H1 (cell line): ENCODE measurements at regions of chr5 and their contacts with region 1.

Region 1: DNA sequence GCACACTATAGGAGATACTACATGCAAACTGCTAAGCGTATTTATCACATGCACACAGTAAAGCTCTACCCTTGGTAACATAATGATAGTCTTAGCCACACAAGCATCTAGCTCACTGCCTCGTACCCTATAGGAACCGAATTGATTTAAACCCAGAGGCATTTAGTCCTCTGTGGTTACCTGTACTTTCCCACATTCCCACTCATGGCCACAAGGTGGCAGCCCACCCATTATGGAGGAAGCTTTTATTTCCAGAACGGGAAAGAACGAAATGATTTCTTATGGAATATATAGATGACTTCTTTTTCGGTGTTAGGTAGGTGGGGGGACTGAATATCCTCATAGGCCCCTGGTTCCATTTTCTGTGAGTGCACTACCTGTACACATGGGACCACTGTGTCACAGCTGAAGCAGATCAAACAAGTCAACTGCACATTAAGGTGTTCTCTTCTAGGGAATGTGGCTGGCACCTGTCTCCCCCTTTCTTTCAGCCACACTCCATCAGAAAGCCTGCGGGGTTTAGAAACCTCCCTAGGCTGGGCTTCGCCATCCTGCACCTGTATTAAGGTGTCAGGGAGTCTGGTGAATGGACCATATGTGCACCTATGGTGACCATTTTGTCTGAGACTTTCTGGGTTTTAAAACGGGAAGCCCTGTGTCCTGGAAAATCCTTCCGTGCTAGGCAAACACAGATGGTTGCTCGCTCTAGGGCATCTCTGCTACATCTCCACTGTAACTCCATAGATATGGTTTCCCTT is 313.2 kb downstream of the SLIT3 start:
- DNase-seq: peak; percentile 25 to 91
- H3K4me3 ChIP-seq: no peak overlapping the region
- H3K27ac ChIP-seq: no peak overlapping the region
- H3K4me1 ChIP-seq: peaks cover 3 to 22% (median 13%) of the 10 kb centered on the region in 4 experiments; a peak in 6 of 7 replicates
- H3K27me3 ChIP-seq: no peaks in the 10 kb centered on the region
- CTCF ChIP-seq: peak; percentile 46 to 85 (median 78)
- EP300 ChIP-seq: no peak
- POLR2A ChIP-seq: no peak
- RAD21 ChIP-seq: peak; percentile 92 to 94

Region 2: DNA sequence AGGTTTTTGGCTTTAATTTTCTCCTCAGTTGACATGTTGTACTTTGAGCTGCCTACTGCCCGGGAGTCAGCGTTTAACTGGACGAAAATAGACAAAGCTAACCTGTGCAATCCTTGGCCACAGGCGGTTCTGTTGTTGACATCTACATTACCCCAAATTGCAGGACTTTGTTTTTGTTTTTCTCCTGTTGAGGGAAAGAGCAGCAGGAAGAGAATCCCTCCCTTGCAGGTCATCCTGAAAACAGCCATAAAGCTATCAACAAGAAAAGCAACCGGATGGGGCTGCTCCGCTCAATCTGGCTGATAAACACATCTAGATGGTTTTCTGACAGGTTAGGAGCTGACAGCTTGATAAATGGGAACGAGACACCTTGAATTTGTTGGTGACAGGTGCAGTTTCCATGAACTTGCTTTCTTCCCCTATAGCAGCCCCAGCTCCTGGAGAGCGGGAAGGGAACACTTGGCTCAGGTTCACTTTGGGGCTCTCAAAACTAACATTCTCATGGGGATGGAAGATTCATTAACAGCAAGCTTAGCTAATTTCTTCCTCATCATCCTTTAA is 18.3 kb before region 1 on chr5:
- CTCF ChIA-PET with region 1: interaction called, 18 read pairs
- POLR2A ChIA-PET with region 1: no interaction called
- DNase-seq: no peak
- H3K4me3 ChIP-seq: no peak overlapping the region
- H3K27ac ChIP-seq: no peak overlapping the region
- H3K4me1 ChIP-seq: no peaks in the 10 kb centered on the region
- H3K27me3 ChIP-seq: no peaks in the 10 kb centered on the region; a peak in 1 of 7 replicates
- CTCF ChIP-seq: no peak
- EP300 ChIP-seq: no peak
- POLR2A ChIP-seq: no peak
- RAD21 ChIP-seq: no peak

Region 3: DNA sequence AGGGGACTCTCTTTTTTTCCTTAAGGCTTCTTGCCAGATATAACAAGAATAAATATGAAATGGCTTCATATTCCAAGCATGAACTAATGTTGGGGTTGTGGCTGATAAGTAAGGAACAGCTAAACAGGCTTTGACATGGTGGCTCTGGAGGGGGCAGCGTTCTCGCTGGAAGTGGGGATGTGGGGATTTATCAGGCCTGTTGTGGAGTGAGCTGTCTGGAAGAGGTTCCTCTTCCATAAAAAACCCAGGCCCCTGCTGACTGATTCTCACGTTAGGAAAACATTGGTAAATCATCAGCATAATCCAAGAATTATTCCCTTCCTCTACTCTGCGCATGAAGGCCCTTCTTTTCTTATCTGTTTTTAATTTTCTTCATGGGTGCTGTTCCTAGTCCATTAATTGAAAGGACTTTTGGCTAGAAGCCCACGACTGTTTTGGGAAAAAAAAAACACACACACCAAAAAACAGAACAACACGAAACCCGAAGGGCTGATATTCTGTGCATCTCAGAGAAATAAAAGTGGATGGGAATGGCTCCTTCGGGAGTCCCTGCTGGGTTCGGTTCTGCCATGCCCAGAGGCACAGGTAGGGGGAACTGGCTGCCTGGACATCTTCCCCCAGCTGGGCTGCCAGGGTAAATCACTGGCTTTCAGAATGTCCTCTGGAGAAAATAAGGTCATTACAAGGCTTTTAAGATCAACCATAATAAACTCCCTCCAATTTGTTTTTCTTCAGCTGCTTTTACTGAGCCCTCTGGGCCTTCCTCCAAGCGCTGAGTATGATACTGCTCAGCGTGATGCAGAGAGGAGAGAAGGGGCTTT is 16.2 kb after region 1 on chr5:
- CTCF ChIA-PET with region 1: interaction called, 29 read pairs
- POLR2A ChIA-PET with region 1: no interaction called
- DNase-seq: no peak
- H3K4me3 ChIP-seq: no peak overlapping the region
- H3K27ac ChIP-seq: no peak overlapping the region
- H3K4me1 ChIP-seq: peaks cover 3 to 13% (median 10%) of the 10 kb centered on the region in 4 experiments; a peak in 5 of 7 replicates
- H3K27me3 ChIP-seq: no peaks in the 10 kb centered on the region
- CTCF ChIP-seq: peak; percentile 56 to 69 (median 65)
- EP300 ChIP-seq: no peak
- POLR2A ChIP-seq: no peak
- RAD21 ChIP-seq: peak; percentile 67 to 80

Region 4: GRCh38 chr5:169149317-169149716 is 161.6 kb after region 1 on chr5:
- CTCF ChIA-PET with region 1: interaction called, 69 read pairs
- POLR2A ChIA-PET with region 1: no interaction called
- DNase-seq: no peak
- H3K4me3 ChIP-seq: no peak overlapping the region
- H3K27ac ChIP-seq: no peak overlapping the region
- H3K4me1 ChIP-seq: peaks cover 0 to 5% (median 3%) of the 10 kb centered on the region in 4 experiments; a peak in 2 of 7 replicates
- H3K27me3 ChIP-seq: no peaks in the 10 kb centered on the region
- CTCF ChIP-seq: peak; percentile 7 to 73 (median 56)
- EP300 ChIP-seq: no peak
- POLR2A ChIP-seq: no peak
- RAD21 ChIP-seq: peak; percentile 56 to 72

Region 5: GRCh38 chr5:169548315-169548714 is 560.6 kb after region 1 on chr5:
- CTCF ChIA-PET with region 1: interaction called, 12 read pairs
- POLR2A ChIA-PET with region 1: no interaction called
- DNase-seq: no peak
- H3K4me3 ChIP-seq: no peak overlapping the region
- H3K27ac ChIP-seq: no peak overlapping the region
- H3K4me1 ChIP-seq: no peaks in the 10 kb centered on the region
- H3K27me3 ChIP-seq: no peaks in the 10 kb centered on the region
- CTCF ChIP-seq: peak in 2 of 3 experiments; percentile 33 to 35; a peak in 2 of 4 replicates
- EP300 ChIP-seq: no peak
- POLR2A ChIP-seq: no peak
- RAD21 ChIP-seq: peak; percentile 82 to 83